ENCODE measurements at regions of chr10 and their contacts with region 1.

Region 1: DNA sequence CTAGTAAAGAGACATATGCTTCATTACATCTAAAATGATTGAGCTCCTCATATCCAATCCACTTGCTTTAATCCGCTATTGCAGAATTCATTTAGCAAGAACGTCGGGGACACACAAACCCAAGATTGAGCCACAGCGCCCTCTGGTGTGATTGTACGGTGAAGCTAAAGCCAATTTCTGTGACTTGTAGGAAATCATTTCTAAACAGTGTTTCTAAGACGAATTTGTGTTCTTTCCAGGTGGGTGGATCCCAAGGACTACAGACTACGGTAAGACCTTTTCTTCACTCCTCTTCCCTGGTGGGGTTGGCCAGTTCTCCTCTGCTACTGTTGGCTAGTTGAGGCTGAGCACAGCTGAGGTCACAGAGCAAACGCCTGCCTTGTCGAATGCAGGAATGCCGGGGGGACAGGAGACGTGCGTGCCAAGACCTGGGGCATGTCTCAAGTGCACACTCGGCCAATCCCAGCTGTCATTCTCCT is 5.2 kb downstream of the DMBT1 start:
- DNase-seq: peak; percentile 50 to 84 (median 68)
- ATAC-seq: no peak
- H3K4me3 ChIP-seq: no peak overlapping the region
- H3K4me3 Mint-ChIP-seq: no peak overlapping the region
- H3K27ac ChIP-seq: no peak overlapping the region
- H3K27ac Mint-ChIP-seq: no peak overlapping the region
- H3K4me1 ChIP-seq: peaks cover 4% of the 10 kb centered on the region
- H3K4me1 Mint-ChIP-seq: peaks cover 15% of the 10 kb centered on the region
- H3K27me3 ChIP-seq: peaks cover 5 to 15% of the 10 kb centered on the region in 2 experiments
- H3K27me3 Mint-ChIP-seq: peaks cover 33% of the 10 kb centered on the region
- CTCF ChIP-seq: peak; percentile 78

Region 2: DNA sequence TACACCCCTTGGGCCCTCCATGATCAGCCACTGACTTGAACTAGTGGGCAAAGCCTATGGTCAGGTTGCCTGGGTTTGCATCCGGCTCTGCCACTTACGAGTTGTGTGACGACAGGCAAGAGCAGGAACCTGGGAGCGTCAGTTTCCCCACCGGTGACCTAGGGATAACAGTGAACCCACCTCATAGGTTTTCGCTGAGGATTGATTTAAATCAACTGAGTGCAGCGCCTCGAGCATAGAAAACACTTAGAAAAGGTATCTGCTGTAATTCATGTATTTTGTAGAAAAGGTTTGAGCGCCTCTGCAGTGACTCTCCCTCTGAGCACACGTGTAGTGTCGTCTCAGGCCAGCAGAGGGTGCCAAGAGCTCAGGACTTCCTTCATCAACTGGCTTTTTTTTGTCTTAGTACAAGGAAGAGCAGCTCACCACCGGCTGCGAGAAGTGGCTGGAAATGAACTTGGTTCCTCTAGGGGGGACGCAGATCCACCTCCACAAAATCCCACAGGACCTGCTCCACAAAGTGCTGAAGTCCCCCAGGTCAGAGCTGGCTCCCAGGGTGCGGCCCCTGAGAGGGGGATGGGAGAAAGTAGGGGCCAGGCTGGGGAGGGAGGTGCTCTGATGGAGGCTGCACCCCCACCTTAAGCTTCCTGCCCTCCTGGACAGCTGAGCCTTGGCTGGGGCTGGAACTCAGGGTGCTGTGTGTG is 267.0 kb before region 1 on chr10:
- CTCF ChIA-PET with region 1: interaction called, 16 read pairs
- POLR2A ChIA-PET with region 1: interaction called, 3 read pairs
- intact Hi-C with region 1: loop called (anchors 1 kb)
- DNase-seq: peak; percentile 39 to 84 (median 58)
- ATAC-seq: peak; percentile 95
- H3K4me3 ChIP-seq: no peak overlapping the region
- H3K4me3 Mint-ChIP-seq: peak overlapping the region; percentile 25
- H3K27ac ChIP-seq: no peak overlapping the region
- H3K27ac Mint-ChIP-seq: no peak overlapping the region
- H3K4me1 ChIP-seq: peaks cover 41% of the 10 kb centered on the region
- H3K4me1 Mint-ChIP-seq: peaks cover 14% of the 10 kb centered on the region
- H3K27me3 ChIP-seq: peaks cover 0 to 2% of the 10 kb centered on the region in 2 experiments
- H3K27me3 Mint-ChIP-seq: peaks cover 6% of the 10 kb centered on the region
- CTCF ChIP-seq: peak; percentile 90

Region 3: GRCh38 chr10:122342293-122343134 is 223.3 kb before region 1 on chr10:
- CTCF ChIA-PET with region 1: interaction called, 3 read pairs
- POLR2A ChIA-PET with region 1: no interaction called
- intact Hi-C with region 1: loop called (anchors 1 kb)
- DNase-seq: peak; percentile 41 to 79 (median 56)
- ATAC-seq: peak; percentile 80
- H3K4me3 ChIP-seq: no peak overlapping the region
- H3K4me3 Mint-ChIP-seq: no peak overlapping the region
- H3K27ac ChIP-seq: no peak overlapping the region
- H3K27ac Mint-ChIP-seq: no peak overlapping the region
- H3K4me1 ChIP-seq: peaks cover 7% of the 10 kb centered on the region
- H3K4me1 Mint-ChIP-seq: peaks cover 6% of the 10 kb centered on the region
- H3K27me3 ChIP-seq: peaks cover 0 to 2% of the 10 kb centered on the region in 2 experiments
- H3K27me3 Mint-ChIP-seq: peaks cover 7% of the 10 kb centered on the region
- CTCF ChIP-seq: peak; percentile 80

Region 4: GRCh38 chr10:122435212-122435827 is 130.4 kb before region 1 on chr10:
- CTCF ChIA-PET with region 1: no interaction called
- POLR2A ChIA-PET with region 1: no interaction called
- intact Hi-C with region 1: loop called (anchors 2 to 5 kb)
- DNase-seq: peak in 3 of 14 experiments; percentile 71 to 77 (median 73)
- ATAC-seq: peak; percentile 49
- H3K4me3 ChIP-seq: no peak overlapping the region
- H3K4me3 Mint-ChIP-seq: no peak overlapping the region
- H3K27ac ChIP-seq: no peak overlapping the region
- H3K27ac Mint-ChIP-seq: peak overlapping the region; percentile 58
- H3K4me1 ChIP-seq: no peaks in the 10 kb centered on the region
- H3K4me1 Mint-ChIP-seq: peaks cover 12% of the 10 kb centered on the region
- H3K27me3 ChIP-seq: no peaks in the 10 kb centered on the region
- H3K27me3 Mint-ChIP-seq: no peaks in the 10 kb centered on the region
- CTCF ChIP-seq: peak; percentile 81

Region 5: DNA sequence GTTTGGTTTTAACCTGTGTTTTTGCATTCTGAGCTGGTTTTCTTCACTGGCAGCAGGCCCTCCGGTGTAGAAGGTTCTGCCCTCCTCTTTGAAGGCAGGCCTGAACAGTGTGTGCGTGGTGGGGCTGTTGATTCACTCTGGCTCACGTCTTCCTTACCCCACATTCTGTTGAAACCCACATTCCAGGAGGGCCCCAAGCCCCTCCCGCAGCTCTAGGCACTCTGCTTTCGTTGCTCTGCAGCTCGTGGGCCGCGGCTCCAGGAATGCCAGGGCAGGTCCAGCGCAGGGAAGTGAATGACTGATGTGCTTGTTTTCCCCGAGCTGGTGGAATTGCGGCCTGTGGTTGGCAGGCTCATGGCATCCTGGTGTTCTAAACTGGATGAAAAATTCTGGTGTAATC is 55.4 kb before region 1 on chr10:
- CTCF ChIA-PET with region 1: interaction called, 7 read pairs
- POLR2A ChIA-PET with region 1: no interaction called
- intact Hi-C with region 1: loop called (anchors 2 to 5 kb)
- DNase-seq: no peak
- ATAC-seq: no peak
- H3K4me3 ChIP-seq: no peak overlapping the region
- H3K4me3 Mint-ChIP-seq: no peak overlapping the region
- H3K27ac ChIP-seq: no peak overlapping the region
- H3K27ac Mint-ChIP-seq: no peak overlapping the region
- H3K4me1 ChIP-seq: peaks cover 19% of the 10 kb centered on the region
- H3K4me1 Mint-ChIP-seq: peaks cover 15% of the 10 kb centered on the region
- H3K27me3 ChIP-seq: no peaks in the 10 kb centered on the region
- H3K27me3 Mint-ChIP-seq: no peaks in the 10 kb centered on the region
- CTCF ChIP-seq: no peak

Region 6: DNA sequence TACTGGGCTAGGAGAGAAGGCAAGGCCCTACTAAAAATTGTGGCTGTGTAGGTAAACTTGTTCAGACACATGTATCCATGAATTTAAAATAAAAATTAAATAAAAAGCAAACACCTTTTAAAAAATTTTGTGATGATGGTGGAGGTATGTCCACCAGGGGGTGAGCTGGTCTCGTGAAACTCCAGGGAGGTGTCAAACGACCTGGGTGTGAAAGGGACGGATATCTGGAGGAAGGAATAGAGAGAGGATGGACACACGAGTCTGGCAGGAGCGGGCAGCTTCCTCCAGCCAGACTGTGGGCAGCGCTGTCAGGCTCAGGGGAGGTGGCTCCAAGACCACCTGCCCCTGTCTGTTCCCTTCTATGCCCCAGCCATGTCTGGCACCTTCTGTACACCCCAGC is 40.0 kb before region 1 on chr10:
- CTCF ChIA-PET with region 1: interaction called, 4 read pairs
- POLR2A ChIA-PET with region 1: interaction called, 3 read pairs
- intact Hi-C with region 1: loop called (anchors 1 to 2 kb)
- DNase-seq: peak in 4 of 14 experiments; percentile 23 to 52 (median 50)
- ATAC-seq: no peak
- H3K4me3 ChIP-seq: no peak overlapping the region
- H3K4me3 Mint-ChIP-seq: no peak overlapping the region
- H3K27ac ChIP-seq: no peak overlapping the region
- H3K27ac Mint-ChIP-seq: no peak overlapping the region
- H3K4me1 ChIP-seq: peaks cover 3% of the 10 kb centered on the region
- H3K4me1 Mint-ChIP-seq: no peaks in the 10 kb centered on the region
- H3K27me3 ChIP-seq: no peaks in the 10 kb centered on the region
- H3K27me3 Mint-ChIP-seq: peaks cover 5% of the 10 kb centered on the region
- CTCF ChIP-seq: no peak

Region 7: GRCh38 chr10:123559066-123559822 is 993.5 kb after region 1 on chr10:
- CTCF ChIA-PET with region 1: no interaction called
- POLR2A ChIA-PET with region 1: no interaction called
- intact Hi-C with region 1: loop called (anchors 2 to 10 kb)
- DNase-seq: peak; percentile 36 to 79 (median 61)
- ATAC-seq: peak; percentile 66
- H3K4me3 ChIP-seq: no peak overlapping the region
- H3K4me3 Mint-ChIP-seq: no peak overlapping the region
- H3K27ac ChIP-seq: no peak overlapping the region
- H3K27ac Mint-ChIP-seq: no peak overlapping the region
- H3K4me1 ChIP-seq: peaks cover 4% of the 10 kb centered on the region
- H3K4me1 Mint-ChIP-seq: no peaks in the 10 kb centered on the region
- H3K27me3 ChIP-seq: peaks cover 0 to 4% of the 10 kb centered on the region in 2 experiments
- H3K27me3 Mint-ChIP-seq: peaks cover 32% of the 10 kb centered on the region
- CTCF ChIP-seq: peak; percentile 98